GM12878 (cell line): ENCODE measurements at regions of chr2 and their contacts with region 1.

Region 1: DNA sequence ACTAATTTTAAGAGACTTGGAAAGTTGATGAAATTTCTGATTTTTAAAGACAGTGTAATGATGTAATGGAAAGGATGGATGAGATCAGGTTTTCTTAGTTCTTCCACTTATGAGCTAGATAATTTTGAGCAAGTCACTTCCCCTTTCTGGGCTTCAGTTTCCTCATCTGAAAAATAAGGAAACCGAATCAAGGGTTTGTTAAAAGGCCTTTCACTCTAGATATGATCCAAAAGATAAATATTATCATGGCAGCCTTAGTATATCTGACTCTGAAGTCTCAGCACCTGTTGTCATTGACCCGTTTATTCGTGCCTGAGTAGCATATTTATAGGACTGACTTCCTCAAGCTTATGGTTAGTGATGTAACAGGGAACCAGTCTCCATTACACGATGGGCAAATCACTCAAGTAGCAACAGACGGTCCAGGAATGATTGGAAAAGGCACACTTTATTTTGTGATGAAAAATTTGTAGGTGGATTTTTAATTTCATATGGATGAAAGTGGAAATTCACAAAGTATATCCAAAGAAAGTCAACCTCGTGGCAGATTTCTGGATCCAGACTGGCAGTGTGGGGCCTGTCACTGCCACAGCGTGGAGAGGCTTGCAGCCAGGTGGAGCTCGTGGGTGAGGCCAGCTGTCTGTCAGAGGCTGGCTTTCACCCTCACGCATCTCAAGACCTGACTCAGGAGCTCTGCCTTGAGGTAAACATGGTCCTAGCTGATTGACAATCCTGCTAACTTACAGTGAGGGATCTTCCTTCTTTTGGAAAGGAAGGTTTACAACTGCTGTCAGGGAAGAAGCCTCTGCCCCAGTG is 137.9 kb upstream of the CXCR4 start:
- DNase-seq: no peak
- ATAC-seq: peak; percentile 78
- H3K4me3 ChIP-seq: no peak overlapping the region
- H3K27ac ChIP-seq: no peak overlapping the region
- H3K4me1 ChIP-seq: peaks cover 12% of the 10 kb centered on the region
- H3K27me3 ChIP-seq: no peaks in the 10 kb centered on the region; a peak in 1 of 4 replicates
- CTCF ChIP-seq: peak in 2 of 3 experiments; percentile 9 to 27; a peak in 3 of 6 replicates
- EP300 ChIP-seq: peak in 1 of 2 experiments; percentile 63; a peak in 1 of 4 replicates
- POLR2A ChIP-seq: no peak
- RAD21 ChIP-seq: no peak

Region 2: GRCh38 chr2:136212423-136213378 is 43.2 kb before region 1 on chr2:
- CTCF ChIA-PET with region 1: interaction called, 11 read pairs
- POLR2A ChIA-PET with region 1: interaction called, 19 read pairs
- RAD21 ChIA-PET with region 1: interaction called, 69 read pairs
- SMC1A ChIA-PET with region 1: interaction called, 65 read pairs
- in situ Hi-C with region 1: no loop called
- intact Hi-C with region 1: loop called (anchors 2 kb)
- DNase-seq: peak; percentile 34
- ATAC-seq: peak; percentile 83
- H3K4me3 ChIP-seq: no peak overlapping the region
- H3K27ac ChIP-seq: no peak overlapping the region
- H3K4me1 ChIP-seq: peaks cover 4% of the 10 kb centered on the region
- H3K27me3 ChIP-seq: peaks cover 0 to 8% of the 10 kb centered on the region in 2 experiments; a peak in 2 of 4 replicates
- CTCF ChIP-seq: no peak
- EP300 ChIP-seq: peak in 1 of 2 experiments; percentile 78; a peak in 3 of 4 replicates
- POLR2A ChIP-seq: no peak
- RAD21 ChIP-seq: no peak

Region 3: DNA sequence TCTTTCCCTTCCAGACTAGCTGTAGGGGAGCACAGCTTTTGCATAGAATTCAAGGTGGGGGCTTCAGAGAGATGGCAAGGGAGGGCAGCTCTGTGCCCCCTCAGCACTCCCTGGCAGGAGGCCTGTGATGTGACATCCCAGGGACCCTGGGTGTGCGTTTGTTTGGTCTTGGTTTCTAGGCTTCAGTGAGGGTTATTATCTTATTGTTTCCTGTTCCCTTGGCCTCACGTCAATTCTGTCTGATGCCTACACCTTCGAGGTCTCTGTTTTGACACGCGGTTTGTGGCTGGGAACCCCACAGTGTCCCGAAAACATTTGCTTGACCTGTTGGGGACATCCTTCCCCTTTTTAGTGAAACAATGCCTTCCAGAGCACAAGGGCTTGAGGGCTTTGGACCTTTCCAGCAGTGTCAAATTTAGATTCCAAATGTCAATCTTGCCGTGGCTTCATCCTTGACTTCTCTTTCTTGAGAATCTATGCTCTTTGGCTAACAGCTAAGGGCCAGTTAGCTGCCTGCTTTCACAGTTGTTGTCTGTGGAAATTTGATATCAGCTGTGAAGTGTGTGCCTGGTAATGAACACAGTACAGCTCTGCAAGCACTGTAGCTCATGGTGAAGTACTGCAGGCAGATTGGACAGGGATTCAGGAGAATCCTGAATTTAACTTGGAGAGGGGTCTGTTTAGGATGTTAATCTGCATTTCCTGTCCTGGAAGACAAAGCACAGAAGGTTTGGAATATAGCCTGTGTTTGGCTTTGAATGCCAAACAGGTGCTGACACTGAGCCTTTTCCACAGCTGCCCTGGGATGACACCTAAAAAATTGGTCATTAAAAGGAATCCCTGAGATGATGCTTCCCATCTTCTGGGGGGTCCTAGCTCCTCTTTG is 29.7 kb before region 1 on chr2:
- CTCF ChIA-PET with region 1: interaction called, 9 read pairs
- POLR2A ChIA-PET with region 1: interaction called, 3 read pairs
- RAD21 ChIA-PET with region 1: interaction called, 18 read pairs
- SMC1A ChIA-PET with region 1: interaction called, 65 read pairs
- in situ Hi-C with region 1: no loop called
- intact Hi-C with region 1: no loop called
- DNase-seq: no peak
- ATAC-seq: peak; percentile 93
- H3K4me3 ChIP-seq: no peak overlapping the region
- H3K27ac ChIP-seq: no peak overlapping the region
- H3K4me1 ChIP-seq: no peaks in the 10 kb centered on the region; the same call in 1 of the 2 replicates
- H3K27me3 ChIP-seq: no peaks in the 10 kb centered on the region
- CTCF ChIP-seq: peak in 1 of 3 experiments; percentile 7; a peak in 1 of 6 replicates
- EP300 ChIP-seq: peak; percentile 96 to 97
- POLR2A ChIP-seq: no peak
- RAD21 ChIP-seq: 0 out of 2 replicates have a peak, but pooled peaks have one; percentile 3

Region 4: GRCh38 chr2:136281281-136282114 is 25.6 kb after region 1 on chr2:
- CTCF ChIA-PET with region 1: interaction called, 31 read pairs
- POLR2A ChIA-PET with region 1: interaction called, 13 read pairs
- RAD21 ChIA-PET with region 1: interaction called, 53 read pairs
- SMC1A ChIA-PET with region 1: interaction called, 166 read pairs
- in situ Hi-C with region 1: no loop called
- intact Hi-C with region 1: no loop called
- DNase-seq: peak; percentile 25
- ATAC-seq: peak; percentile 85
- H3K4me3 ChIP-seq: no peak overlapping the region
- H3K27ac ChIP-seq: no peak overlapping the region
- H3K4me1 ChIP-seq: peaks cover 22% of the 10 kb centered on the region
- H3K27me3 ChIP-seq: no peaks in the 10 kb centered on the region; a peak in 1 of 4 replicates
- CTCF ChIP-seq: no peak
- EP300 ChIP-seq: no peak
- POLR2A ChIP-seq: no peak
- RAD21 ChIP-seq: no peak

Region 5: DNA sequence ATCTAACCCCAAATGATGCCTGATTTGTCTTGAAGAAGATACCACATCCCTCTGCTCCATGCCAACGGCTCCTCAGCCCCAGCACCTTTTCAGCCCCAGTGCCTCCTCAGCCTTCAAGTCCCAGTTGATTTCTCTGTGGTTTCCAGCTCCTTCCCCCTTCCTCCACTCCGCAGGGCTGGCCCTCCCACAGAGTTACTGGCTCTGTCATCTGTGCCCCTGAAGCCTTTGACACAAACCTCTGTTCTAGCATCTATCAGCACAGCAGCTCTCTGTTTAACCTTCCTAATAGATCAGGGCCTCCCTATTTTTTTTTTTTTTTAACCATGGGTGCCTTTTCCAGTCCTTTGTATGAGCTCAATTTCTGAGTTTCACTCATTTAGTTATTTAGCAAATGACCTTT is 63.4 kb after region 1 on chr2:
- CTCF ChIA-PET with region 1: interaction called, 9 read pairs
- POLR2A ChIA-PET with region 1: no interaction called
- RAD21 ChIA-PET with region 1: interaction called, 50 read pairs
- SMC1A ChIA-PET with region 1: interaction called, 79 read pairs
- in situ Hi-C with region 1: no loop called
- intact Hi-C with region 1: no loop called
- DNase-seq: no peak
- ATAC-seq: peak; percentile 81
- H3K4me3 ChIP-seq: no peak overlapping the region
- H3K27ac ChIP-seq: no peak overlapping the region
- H3K4me1 ChIP-seq: peaks cover 5% of the 10 kb centered on the region; the same call in 1 of the 2 replicates
- H3K27me3 ChIP-seq: no peaks in the 10 kb centered on the region
- CTCF ChIP-seq: no peak
- EP300 ChIP-seq: no peak
- POLR2A ChIP-seq: no peak
- RAD21 ChIP-seq: no peak

Region 6: DNA sequence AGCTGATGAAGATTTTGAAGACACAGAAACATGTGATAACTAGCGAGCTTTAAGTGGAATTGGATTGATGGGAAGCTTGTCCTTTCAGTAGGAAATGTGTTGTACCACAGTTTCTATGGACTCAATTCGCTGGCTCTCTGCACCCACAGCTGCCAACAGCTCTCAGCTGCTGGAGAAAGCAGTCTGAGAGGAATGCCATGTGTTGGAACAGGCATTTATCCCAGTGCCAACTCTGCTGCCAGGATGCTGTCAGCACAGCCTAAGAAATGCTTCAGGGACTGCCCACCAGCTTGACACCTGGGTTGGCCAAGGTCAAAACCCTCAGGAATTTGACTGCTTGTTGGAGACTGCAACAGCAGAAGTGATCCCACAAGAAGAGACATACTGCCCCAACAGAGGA is 316.5 kb after region 1 on chr2:
- CTCF ChIA-PET with region 1: no interaction called
- POLR2A ChIA-PET with region 1: no interaction called
- RAD21 ChIA-PET with region 1: no interaction called
- SMC1A ChIA-PET with region 1: no interaction called
- in situ Hi-C with region 1: no loop called
- intact Hi-C with region 1: no loop called
- DNase-seq: no peak
- ATAC-seq: no peak
- H3K4me3 ChIP-seq: no peak overlapping the region
- H3K27ac ChIP-seq: no peak overlapping the region
- H3K4me1 ChIP-seq: no peaks in the 10 kb centered on the region
- H3K27me3 ChIP-seq: no peaks in the 10 kb centered on the region
- CTCF ChIP-seq: no peak
- EP300 ChIP-seq: no peak
- POLR2A ChIP-seq: no peak
- RAD21 ChIP-seq: no peak